Dorsolateral prefrontal cortex (tissue), 120 donors: ENCODE measurements at regions of chr12 and their contacts with region 1.

Region 1: DNA sequence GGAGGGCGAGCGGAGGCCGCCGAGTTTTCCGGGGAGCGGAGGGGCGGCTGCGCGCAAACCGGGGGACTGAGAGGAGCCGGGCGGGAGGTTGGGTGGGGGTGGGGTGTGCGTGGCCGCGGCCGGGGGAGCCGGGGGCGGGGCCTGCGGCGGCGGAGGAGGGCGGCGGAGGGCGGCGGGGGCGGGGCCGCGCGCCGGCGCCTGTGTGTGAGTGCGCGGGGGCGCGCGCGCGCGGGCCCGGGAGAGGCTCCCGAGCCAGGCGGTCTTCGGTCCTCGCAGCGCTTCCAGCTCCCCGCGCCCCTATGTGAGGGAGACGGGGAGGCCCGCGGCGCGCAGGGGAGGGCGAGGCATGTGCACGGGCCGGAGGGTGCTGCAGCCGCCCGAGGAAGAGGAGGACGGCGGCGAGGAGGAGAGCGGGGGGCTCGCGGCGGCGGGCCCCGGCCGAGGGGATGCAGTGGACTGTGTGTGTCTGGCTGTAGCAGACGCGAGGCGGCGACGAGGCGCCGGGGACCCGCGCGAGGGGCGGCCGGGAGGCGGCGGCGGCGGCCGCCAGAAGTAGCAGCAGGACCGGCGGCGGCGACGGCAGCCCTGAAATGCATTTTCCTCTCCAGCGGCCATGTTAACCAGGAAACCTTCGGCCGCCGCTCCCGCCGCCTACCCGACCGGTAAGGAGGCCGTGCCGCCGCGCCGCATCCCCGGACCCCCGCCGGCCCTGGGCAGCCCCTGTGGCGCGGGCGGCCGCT is at the start of gene DYRK2:
- DNase-seq: peak; percentile 47 to 79 (median 66)
- H3K4me3 ChIP-seq: peak within 1 kb of the TSS; percentile 69 to 97 (median 87)
- H3K27ac ChIP-seq: peak within 1 kb of the TSS; percentile 57 to 96 (median 90)
- H3K27me3 ChIP-seq: no peaks in the 10 kb centered on the region
- CTCF ChIP-seq: peak in 12 of 56 donors; percentile 12 to 29 (median 18)
- total RNA-seq, gene DYRK2: 10.8 to 27.2 (median 18.3) TPM

Region 2: GRCh38 chr12:67355578-67356379 is 292.9 kb before region 1 on chr12:
- intact Hi-C with region 1: loop called in 1 of 2 experiments (anchors 10 kb)
- DNase-seq: no peak
- H3K4me3 ChIP-seq: peak overlapping the region in 4 of 59 donors; percentile 9 to 30 (median 20)
- H3K27ac ChIP-seq: peak overlapping the region in 3 of 59 donors; percentile 8 to 54 (median 30)
- H3K27me3 ChIP-seq: peaks cover 0 to 6% (median 0%) of the 10 kb centered on the region in 45 donors
- CTCF ChIP-seq: peak; percentile 44 to 90 (median 70)

Region 3: DNA sequence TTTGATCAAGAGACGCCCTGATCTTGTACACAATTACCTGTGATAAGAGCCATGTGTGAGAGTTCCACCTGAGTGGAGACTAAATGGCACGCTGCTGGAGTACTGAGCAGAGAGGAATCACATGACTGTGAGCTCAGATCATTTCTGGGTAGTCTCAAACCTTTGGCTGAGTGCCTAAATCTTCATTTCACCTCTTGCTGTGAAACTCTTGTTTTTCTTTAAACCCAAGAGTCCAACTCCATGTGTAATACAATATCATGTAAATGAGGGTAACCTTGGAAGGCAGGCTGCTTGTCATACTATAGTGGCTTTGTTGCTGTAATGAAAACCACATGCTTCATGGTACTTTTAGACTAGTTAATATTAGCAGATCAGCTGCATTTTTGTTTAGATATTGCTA is 222.6 kb before region 1 on chr12:
- intact Hi-C with region 1: loop called in 1 of 2 experiments (anchors 5 kb)
- DNase-seq: no peak
- H3K4me3 ChIP-seq: no peak overlapping the region
- H3K27ac ChIP-seq: no peak overlapping the region
- H3K27me3 ChIP-seq: peaks cover 0 to 3% (median 0%) of the 10 kb centered on the region in 45 donors
- CTCF ChIP-seq: no peak

Region 4: GRCh38 chr12:67441736-67442346 is 206.8 kb before region 1 on chr12:
- intact Hi-C with region 1: loop called in 1 of 2 experiments (anchors 10 kb)
- DNase-seq: peak; percentile 60 to 84 (median 78)
- H3K4me3 ChIP-seq: peak overlapping the region in 29 of 59 donors; percentile 6 to 50 (median 25)
- H3K27ac ChIP-seq: peak overlapping the region in 2 of 59 donors; percentile 31 to 41
- H3K27me3 ChIP-seq: no peaks in the 10 kb centered on the region
- CTCF ChIP-seq: peak; percentile 43 to 89 (median 76)

Region 5: DNA sequence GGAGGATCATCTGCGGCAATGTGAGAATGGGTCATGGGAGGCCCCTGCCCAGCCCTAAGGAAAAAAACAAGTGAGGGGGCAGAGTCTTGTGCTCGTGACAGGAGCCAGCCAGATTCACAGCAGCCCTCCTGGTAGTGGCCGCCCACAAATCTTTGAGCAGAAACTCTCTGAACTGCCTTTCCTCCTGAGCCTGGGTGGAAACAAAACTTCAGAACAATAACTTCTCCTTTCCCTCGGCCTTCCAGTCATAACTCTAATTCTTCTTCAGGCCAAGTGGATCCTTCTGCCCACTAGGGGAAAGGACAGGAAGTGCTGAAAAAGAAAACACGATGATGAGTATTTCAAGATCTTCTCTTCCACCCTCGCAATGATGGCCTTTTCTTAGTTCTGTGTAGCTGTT is 190.9 kb before region 1 on chr12:
- intact Hi-C with region 1: loop called in 1 of 2 experiments (anchors 10 kb)
- DNase-seq: no peak
- H3K4me3 ChIP-seq: no peak overlapping the region
- H3K27ac ChIP-seq: no peak overlapping the region
- H3K27me3 ChIP-seq: no peaks in the 10 kb centered on the region
- CTCF ChIP-seq: peak in 22 of 56 donors; percentile 10 to 40 (median 22)

Region 6: DNA sequence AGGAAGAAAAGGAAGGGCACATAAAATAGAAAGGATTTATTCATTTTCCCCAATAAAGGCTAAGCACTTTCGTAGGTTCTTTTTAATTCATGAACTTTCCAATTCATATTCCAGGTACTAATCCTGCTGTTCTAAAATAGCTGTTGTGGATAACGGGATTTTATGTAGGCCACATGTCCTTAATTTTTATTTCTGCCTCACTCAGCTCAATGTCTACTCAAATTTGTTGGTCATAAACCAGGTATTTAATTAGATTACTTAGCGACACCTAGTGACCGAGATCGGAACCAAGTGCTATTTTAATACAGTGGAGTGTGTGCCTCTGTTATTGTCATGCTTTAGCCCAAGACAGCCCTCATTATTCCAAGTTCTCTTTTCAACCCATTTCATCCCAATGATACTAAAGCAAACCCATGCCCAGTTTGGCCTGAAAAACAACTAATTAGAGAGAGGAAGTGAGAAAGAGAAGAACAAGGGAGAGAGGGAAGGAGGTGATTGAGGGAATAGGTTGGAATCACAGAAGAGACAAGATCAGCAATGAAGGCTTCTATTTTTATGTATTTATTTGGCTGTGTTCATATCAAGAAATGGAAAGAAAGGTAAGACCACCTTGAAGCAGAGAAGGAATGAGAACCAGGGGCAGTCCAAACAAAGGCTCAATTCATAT is 294.7 kb after region 1 on chr12:
- intact Hi-C with region 1: loop called (anchors 5 to 10 kb)
- DNase-seq: peak in 4 of 10 donors; percentile 39 to 88 (median 48)
- H3K4me3 ChIP-seq: no peak overlapping the region
- H3K27ac ChIP-seq: no peak overlapping the region
- H3K27me3 ChIP-seq: no peaks in the 10 kb centered on the region
- CTCF ChIP-seq: peak; percentile 47 to 95 (median 79)